Activated CD4-positive, alpha-beta memory T cell treated with anti-CD3 and anti-CD28 coated beads for 36 hours (primary cell): ENCODE measurements at regions of chr2 and their contacts with region 1.

Region 1: DNA sequence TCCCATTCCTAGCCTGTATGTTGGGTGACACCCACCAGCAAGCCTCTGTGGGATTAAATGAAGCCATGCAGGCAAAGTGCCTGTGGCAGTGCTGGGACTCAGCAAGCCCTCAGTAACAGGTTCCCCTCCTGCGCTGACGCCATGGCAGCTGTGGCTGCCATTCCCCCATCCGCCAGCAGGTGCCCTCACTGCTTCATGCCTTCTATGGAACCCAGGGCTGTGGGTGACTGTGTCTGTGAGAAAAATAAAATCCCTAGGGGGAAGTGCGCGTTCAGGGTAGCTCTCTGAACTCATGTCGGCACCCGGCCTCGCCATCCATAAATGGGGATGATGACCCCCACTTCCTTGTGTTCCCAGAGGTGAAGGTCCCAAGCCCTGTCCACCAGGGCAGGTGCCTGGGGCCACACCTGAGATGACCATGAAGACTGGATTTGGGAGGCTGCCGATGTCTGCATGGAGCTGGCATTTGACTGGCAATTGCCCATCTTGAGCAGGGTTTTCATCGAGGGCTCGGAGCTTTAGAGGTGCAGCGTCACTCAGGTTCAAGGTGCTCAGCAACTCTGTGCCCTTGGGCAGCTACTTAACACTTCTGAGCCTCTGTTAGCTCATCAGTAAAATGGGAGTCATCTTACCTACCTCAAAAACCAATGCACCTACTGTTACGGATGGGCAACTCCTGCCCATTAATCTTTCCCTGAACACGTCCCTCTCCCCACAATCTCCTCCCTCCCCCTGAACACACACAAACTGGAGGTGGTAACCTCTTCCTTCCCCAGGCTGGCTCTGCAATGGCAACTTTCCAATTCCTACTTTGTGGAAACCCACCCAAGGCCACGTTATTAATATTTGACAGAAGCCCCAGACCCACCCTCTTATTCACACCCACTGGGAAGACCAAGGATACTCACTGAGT is 2.9 kb upstream of the MAL start:
- DNase-seq: peak; percentile 93
- H3K4me3 Mint-ChIP-seq: no peak overlapping the region
- H3K27ac Mint-ChIP-seq: peak overlapping the region; percentile 55
- H3K4me1 Mint-ChIP-seq: peaks cover 44% of the 10 kb centered on the region
- H3K27me3 Mint-ChIP-seq: no peaks in the 10 kb centered on the region

Region 2: DNA sequence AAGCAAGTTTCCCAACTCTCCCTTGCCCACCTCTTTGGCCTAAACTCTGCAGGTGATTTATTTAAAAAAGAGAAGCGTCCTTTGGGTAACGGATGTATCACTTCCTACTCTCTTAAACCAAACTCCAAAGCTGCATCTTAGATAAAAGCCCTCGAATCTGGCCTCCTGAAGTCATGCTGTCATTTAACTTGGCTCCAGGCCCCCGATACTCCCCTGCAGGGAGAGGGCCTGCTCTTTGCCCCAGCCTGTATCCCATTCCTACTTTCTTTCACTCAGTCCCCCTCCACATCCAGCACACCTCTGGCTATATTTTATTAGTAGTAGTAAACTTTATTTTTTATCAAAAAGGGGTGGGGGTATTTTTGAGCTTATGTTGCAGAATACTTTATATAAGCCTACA is 132.3 kb before region 1 on chr2:
- CTCF ChIA-PET with region 1: no interaction called
- POLR2A ChIA-PET with region 1: no interaction called
- intact Hi-C with region 1: no loop called
- DNase-seq: no peak
- H3K4me3 Mint-ChIP-seq: no peak overlapping the region
- H3K27ac Mint-ChIP-seq: no peak overlapping the region
- H3K4me1 Mint-ChIP-seq: no peaks in the 10 kb centered on the region
- H3K27me3 Mint-ChIP-seq: peaks cover 17% of the 10 kb centered on the region

Region 3: DNA sequence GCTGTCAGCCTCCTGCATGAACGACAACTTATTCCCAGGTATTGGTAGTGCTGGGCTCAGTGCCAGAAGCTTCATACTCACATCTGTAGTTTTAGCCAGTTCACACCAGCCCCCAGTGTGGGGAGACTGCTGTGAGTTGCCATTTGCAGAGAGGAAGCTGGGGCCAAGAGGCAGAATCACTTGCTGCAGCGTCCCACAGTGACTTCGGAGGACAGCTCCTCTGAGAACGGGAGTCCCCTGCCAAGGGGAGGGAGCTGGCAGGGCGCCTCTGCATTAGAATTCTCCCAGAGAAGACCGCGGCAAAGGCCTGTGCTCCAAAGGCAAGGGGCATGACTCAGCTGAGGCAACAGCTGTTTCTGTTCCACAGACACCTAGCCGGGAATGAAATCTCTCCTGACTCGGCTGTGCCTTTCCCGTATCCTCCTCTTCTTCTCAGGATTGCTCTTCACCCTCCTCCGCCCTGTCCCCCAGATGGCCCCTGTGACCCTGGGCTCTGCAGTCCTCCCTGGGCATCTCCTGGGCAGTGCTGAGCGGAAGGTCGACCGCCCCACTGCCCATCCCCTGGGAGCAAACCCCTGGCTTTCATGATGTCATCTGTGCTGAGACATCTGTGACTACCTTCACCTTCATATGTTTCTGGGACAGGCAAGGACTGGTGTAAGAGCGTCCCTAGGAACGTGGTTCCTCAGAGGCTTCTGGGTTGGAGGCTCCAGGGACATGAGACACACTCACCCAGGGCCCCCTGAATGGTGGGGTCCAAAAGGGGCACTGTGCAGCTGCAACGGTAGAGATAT is 20.9 kb after region 1 on chr2:
- CTCF ChIA-PET with region 1: interaction called, 49 read pairs
- POLR2A ChIA-PET with region 1: interaction called, 8 read pairs
- intact Hi-C with region 1: loop called (anchors 1 kb)
- DNase-seq: peak; percentile 79
- H3K4me3 Mint-ChIP-seq: no peak overlapping the region
- H3K27ac Mint-ChIP-seq: peak overlapping the region; percentile 59
- H3K4me1 Mint-ChIP-seq: peaks cover 72% of the 10 kb centered on the region
- H3K27me3 Mint-ChIP-seq: no peaks in the 10 kb centered on the region

Region 4: GRCh38 chr2:95062242-95063085 is 39.9 kb after region 1 on chr2:
- CTCF ChIA-PET with region 1: interaction called, 15 read pairs
- POLR2A ChIA-PET with region 1: interaction called, 3 read pairs
- intact Hi-C with region 1: no loop called
- DNase-seq: no peak
- H3K4me3 Mint-ChIP-seq: no peak overlapping the region
- H3K27ac Mint-ChIP-seq: peak overlapping the region; percentile 71
- H3K4me1 Mint-ChIP-seq: peaks cover 29% of the 10 kb centered on the region
- H3K27me3 Mint-ChIP-seq: no peaks in the 10 kb centered on the region

Region 5: DNA sequence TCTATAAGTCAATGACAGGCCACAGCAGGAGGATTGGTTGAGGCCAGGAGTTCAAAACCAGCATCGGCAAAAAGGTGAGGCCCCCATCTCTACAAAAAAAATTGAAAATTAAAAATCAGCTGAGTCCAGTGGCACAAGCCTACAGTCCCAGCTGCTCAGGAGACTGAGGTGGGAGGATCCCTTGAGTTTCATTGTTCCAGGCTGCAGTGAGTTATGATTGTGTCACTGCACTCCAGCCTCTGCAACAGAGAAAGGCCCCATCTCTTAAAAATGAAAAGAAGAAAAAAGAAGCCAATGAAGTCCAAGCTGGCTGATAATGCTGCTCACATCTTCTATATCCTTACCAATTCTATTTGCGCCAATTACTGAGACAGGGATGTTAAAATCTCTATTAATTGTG is 59.9 kb after region 1 on chr2:
- CTCF ChIA-PET with region 1: interaction called, 409 read pairs
- POLR2A ChIA-PET with region 1: interaction called, 17 read pairs
- intact Hi-C with region 1: loop called (anchors 1 kb)
- DNase-seq: no peak
- H3K4me3 Mint-ChIP-seq: no peak overlapping the region
- H3K27ac Mint-ChIP-seq: no peak overlapping the region
- H3K4me1 Mint-ChIP-seq: peaks cover 19% of the 10 kb centered on the region
- H3K27me3 Mint-ChIP-seq: peaks cover 1% of the 10 kb centered on the region

Region 6: DNA sequence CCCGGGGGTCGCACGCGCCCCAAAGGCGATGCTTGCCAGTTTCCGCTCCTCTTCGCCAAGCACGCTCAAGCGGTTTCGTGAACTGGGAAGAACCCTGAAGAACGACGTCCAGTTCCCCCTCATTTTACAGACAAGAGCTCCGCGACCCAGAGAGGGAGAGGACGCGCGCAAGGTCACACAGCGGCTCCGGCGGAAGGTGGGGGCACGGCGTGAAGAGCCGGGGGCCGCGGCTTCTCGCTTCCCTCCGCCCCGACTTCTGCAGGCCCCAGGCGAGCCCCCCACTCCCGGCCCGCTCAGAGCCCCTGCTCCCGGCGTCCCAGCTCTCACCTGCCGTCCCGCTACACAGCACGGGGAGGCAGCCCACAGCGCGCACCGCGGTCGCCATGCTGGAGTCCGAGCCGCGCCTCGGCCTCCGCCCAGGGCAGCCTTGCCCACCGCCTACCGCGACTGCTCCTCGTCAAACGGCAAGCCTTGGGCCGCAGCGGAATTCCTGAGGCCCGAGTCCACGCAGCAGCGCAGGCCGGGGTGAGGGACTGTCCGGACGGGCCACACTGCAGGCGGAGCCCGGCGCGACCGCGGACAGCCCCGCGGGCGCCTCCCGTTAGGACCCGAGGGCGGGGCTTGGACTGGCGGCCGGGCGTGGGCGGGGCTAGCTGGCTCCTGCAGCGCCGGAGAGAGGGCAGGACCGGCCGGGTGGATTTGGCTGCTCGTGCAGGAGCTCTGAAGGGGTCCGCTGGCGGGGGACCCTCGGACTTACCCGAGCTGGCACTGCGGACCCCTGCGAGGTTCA is 99.0 kb after region 1 on chr2 and contains the start of gene MRPS5:
- CTCF ChIA-PET with region 1: interaction called, 143 read pairs
- POLR2A ChIA-PET with region 1: no interaction called
- intact Hi-C with region 1: no loop called
- DNase-seq: peak; percentile 90
- H3K4me3 Mint-ChIP-seq: peak within 1 kb of the TSS; percentile 90
- H3K27ac Mint-ChIP-seq: peak within 1 kb of the TSS; percentile 91
- H3K4me1 Mint-ChIP-seq: peaks cover 43% of the 10 kb centered on the region
- H3K27me3 Mint-ChIP-seq: no peaks in the 10 kb centered on the region
- total RNA-seq, gene MRPS5: 79.3 to 82.3 TPM

Region 7: DNA sequence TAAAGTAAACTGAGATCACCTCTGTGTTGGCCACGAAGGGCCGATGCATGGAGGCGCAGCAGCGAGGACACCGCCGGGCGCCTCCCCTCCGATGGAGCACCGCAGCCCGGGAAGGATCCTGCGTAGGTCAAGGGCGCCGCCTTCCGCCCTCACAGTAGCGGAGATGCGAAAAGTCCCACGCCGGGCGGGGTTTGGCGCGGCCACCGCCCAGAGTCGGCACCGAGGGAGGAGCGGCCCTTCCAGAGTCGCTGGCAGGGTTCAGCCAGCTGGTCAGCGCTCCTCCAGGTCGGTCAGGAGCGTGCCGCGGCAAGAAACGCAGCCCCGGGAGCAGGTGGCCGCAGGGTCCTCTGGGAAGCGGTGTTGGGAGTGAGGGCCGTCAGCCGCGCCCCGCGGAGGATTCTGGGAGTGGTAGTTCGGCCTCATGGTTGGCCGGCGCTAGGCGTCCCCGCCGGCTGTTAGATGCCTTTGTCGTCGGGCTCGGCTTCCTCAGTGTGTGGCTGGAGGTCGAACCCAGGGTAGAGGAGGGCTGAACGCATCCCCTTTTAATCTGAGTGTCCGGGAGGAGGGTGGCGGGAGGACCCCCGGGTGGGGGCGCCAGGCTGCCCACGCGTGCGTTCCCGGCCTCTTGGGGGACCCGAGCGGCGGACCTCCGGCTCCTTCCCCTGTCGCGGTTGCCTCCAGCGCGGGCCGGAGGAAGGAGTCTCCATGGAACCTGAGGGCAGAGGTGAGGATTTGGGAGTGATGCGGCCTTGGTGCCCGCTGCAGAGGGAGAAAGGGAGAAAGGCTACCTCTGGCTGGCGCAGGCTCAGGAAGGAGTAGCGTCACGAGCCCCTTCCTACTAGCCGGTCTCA is 184.8 kb after region 1 on chr2 and contains the start of gene ZNF892:
- CTCF ChIA-PET with region 1: interaction called, 6 read pairs
- POLR2A ChIA-PET with region 1: no interaction called
- intact Hi-C with region 1: loop called (anchors 2 kb)
- DNase-seq: peak; percentile 88
- H3K4me3 Mint-ChIP-seq: peak within 1 kb of the TSS; percentile 89
- H3K27ac Mint-ChIP-seq: peak within 1 kb of the TSS; percentile 30
- H3K4me1 Mint-ChIP-seq: peaks cover 15% of the 10 kb centered on the region
- H3K27me3 Mint-ChIP-seq: no peaks in the 10 kb centered on the region
- total RNA-seq, gene ZNF892: 2.7 to 3.3 TPM

Region 8: GRCh38 chr2:95402370-95403203 is 380.0 kb after region 1 on chr2 and contains the start of gene FAHD2A:
- CTCF ChIA-PET with region 1: no interaction called
- POLR2A ChIA-PET with region 1: no interaction called
- intact Hi-C with region 1: loop called (anchors 5 kb)
- DNase-seq: peak; percentile 97
- H3K4me3 Mint-ChIP-seq: peak within 1 kb of the TSS; percentile 91
- H3K27ac Mint-ChIP-seq: peak within 1 kb of the TSS; percentile 68
- H3K4me1 Mint-ChIP-seq: peaks cover 17% of the 10 kb centered on the region
- H3K27me3 Mint-ChIP-seq: no peaks in the 10 kb centered on the region
- total RNA-seq, gene FAHD2A: 42.8 to 43.9 TPM